Activated CD4-positive, alpha-beta T cell treated with anti-CD3 and anti-CD28 coated beads for 36 hours (primary cell): ENCODE measurements at regions of chr9 and their contacts with region 1.

Region 1: GRCh38 chr9:115035841-115036612 is 81.9 kb downstream of the TNC start:
- DNase-seq: peak; percentile 71
- ATAC-seq: peak; percentile 87
- H3K4me3 Mint-ChIP-seq: peak overlapping the region; percentile 1
- H3K27ac Mint-ChIP-seq: peak overlapping the region; percentile 84
- H3K4me1 Mint-ChIP-seq: peaks cover 24% of the 10 kb centered on the region
- H3K27me3 Mint-ChIP-seq: peaks cover 7% of the 10 kb centered on the region

Region 2: GRCh38 chr9:114945616-114946412 is 90.2 kb before region 1 on chr9:
- CTCF ChIA-PET with region 1: no interaction called
- POLR2A ChIA-PET with region 1: no interaction called
- intact Hi-C with region 1: no loop called
- DNase-seq: no peak
- ATAC-seq: no peak
- H3K4me3 Mint-ChIP-seq: no peak overlapping the region
- H3K27ac Mint-ChIP-seq: no peak overlapping the region
- H3K4me1 Mint-ChIP-seq: peaks cover 7% of the 10 kb centered on the region
- H3K27me3 Mint-ChIP-seq: no peaks in the 10 kb centered on the region

Region 3: GRCh38 chr9:115000217-115000639 is 35.8 kb before region 1 on chr9:
- CTCF ChIA-PET with region 1: no interaction called
- POLR2A ChIA-PET with region 1: no interaction called
- intact Hi-C with region 1: loop called in 1 of 2 experiments (anchors 1 kb)
- DNase-seq: peak; percentile 58
- ATAC-seq: peak; percentile 69
- H3K4me3 Mint-ChIP-seq: peak overlapping the region; percentile 79
- H3K27ac Mint-ChIP-seq: peak overlapping the region; percentile 92
- H3K4me1 Mint-ChIP-seq: peaks cover 68% of the 10 kb centered on the region
- H3K27me3 Mint-ChIP-seq: no peaks in the 10 kb centered on the region

Region 4: GRCh38 chr9:115204904-115205453 is 169.0 kb after region 1 on chr9:
- CTCF ChIA-PET with region 1: no interaction called
- POLR2A ChIA-PET with region 1: no interaction called
- intact Hi-C with region 1: loop called (anchors 2 to 5 kb)
- DNase-seq: no peak
- ATAC-seq: peak; percentile 78
- H3K4me3 Mint-ChIP-seq: no peak overlapping the region
- H3K27ac Mint-ChIP-seq: peak overlapping the region; percentile 20
- H3K4me1 Mint-ChIP-seq: peaks cover 38% of the 10 kb centered on the region
- H3K27me3 Mint-ChIP-seq: peaks cover 32% of the 10 kb centered on the region